Activated CD4-positive, alpha-beta T cell treated with anti-CD3 and anti-CD28 coated beads for 36 hours (primary cell): ENCODE measurements at regions of chr13 and their contacts with region 1.

Region 1: DNA sequence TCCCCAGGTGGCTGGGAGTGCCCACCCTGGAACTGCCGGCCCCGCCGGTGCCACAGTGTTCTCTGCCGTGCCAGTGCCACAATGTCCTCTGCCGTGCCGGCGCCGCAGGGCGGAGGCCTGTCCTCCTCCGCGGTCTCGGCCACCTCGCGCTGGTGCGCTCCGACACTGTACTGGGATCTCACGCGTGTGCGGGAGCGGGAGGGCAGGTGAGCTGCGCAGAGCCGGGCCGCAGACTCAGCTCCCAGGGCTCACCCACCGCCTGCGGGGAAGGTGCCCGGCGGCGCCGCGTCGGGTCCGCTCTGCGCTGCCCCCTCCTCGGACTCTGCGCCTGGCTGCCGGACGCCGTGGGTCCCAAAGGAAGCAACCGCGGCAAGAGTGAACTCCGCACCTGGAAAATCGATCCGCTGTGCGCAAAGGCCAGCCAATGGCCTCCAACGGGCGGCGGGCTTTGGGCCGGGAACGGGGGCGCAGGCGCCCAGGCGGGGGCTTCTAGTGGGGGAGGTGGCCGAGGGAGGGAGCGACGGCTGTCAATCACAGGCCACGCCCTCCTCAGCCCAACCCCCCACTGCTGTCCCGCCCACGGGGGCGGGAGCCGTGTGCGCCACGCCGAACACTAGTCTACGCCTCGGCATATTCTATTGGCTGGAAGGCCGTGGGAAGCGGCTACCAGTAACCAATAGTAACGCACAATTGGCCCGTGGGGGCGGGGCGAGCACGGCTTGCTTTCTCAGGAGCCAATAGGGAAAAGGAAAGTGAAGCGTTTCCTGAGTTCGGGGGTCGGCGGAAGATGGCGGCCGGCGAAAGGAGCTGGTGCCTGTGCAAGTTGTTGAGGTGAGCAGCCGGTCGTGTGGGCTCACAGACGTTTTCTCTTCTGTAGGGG is at the start of gene ALG11:
- DNase-seq: peak; percentile 100
- ATAC-seq: peak; percentile 99
- H3K4me3 Mint-ChIP-seq: peak within 1 kb of the TSS; percentile 100
- H3K27ac Mint-ChIP-seq: peak within 1 kb of the TSS; percentile 91
- H3K4me1 Mint-ChIP-seq: peaks cover 20% of the 10 kb centered on the region
- H3K27me3 Mint-ChIP-seq: peaks cover 17% of the 10 kb centered on the region
- total RNA-seq, gene ALG11: 14.1 to 18.1 TPM

Region 2: DNA sequence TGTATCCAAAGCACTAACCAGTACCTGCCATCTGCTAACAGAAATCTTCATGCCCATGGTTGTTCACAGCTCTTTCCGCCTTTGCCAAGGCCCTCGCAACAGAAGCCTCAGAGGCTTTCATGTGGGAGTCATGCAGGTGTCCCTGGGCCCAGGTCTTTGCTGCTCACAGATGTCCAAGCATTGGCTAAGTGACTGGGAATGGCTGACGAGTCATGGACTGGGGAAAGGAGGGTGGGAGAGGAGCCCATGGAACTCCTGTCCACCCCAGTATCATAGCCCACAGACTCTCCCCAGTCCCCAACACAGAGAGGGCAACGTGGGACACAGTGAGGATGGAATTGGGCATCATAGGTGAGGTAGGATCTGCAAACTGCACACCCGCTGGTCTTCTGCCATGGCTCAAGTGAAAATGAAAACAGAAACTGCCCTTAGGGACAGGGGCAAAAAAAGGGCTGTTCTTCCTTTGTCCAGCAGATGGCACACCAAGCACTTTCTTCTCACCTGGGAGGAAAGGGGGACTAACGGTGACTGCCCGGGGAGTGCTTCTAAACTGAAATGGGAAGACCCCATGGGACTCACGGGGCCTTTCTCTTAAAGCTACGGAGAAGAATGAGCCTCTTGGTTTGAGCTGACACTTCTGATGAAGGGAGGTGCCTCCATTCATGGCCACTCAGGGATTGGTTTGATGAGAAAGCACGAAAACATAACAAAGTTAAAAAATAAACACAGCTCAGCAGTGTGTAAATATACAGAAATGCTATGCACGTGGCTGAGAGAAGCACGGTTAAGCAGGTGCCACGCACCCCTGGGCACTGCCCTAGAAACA is 196.8 kb before region 1 on chr13:
- CTCF ChIA-PET with region 1: interaction called, 3 read pairs
- POLR2A ChIA-PET with region 1: no interaction called
- intact Hi-C with region 1: loop called in 1 of 2 experiments (anchors 2 kb)
- DNase-seq: peak; percentile 83
- ATAC-seq: peak; percentile 70
- H3K4me3 Mint-ChIP-seq: peak overlapping the region; percentile 56
- H3K27ac Mint-ChIP-seq: peak overlapping the region; percentile 83
- H3K4me1 Mint-ChIP-seq: peaks cover 81% of the 10 kb centered on the region
- H3K27me3 Mint-ChIP-seq: no peaks in the 10 kb centered on the region

Region 3: GRCh38 chr13:52001120-52001731 is 10.6 kb before region 1 on chr13:
- CTCF ChIA-PET with region 1: interaction called, 17 read pairs
- POLR2A ChIA-PET with region 1: no interaction called
- intact Hi-C with region 1: no loop called
- DNase-seq: no peak
- ATAC-seq: peak; percentile 89
- H3K4me3 Mint-ChIP-seq: no peak overlapping the region
- H3K27ac Mint-ChIP-seq: no peak overlapping the region
- H3K4me1 Mint-ChIP-seq: peaks cover 3% of the 10 kb centered on the region
- H3K27me3 Mint-ChIP-seq: peaks cover 4% of the 10 kb centered on the region

Region 4: DNA sequence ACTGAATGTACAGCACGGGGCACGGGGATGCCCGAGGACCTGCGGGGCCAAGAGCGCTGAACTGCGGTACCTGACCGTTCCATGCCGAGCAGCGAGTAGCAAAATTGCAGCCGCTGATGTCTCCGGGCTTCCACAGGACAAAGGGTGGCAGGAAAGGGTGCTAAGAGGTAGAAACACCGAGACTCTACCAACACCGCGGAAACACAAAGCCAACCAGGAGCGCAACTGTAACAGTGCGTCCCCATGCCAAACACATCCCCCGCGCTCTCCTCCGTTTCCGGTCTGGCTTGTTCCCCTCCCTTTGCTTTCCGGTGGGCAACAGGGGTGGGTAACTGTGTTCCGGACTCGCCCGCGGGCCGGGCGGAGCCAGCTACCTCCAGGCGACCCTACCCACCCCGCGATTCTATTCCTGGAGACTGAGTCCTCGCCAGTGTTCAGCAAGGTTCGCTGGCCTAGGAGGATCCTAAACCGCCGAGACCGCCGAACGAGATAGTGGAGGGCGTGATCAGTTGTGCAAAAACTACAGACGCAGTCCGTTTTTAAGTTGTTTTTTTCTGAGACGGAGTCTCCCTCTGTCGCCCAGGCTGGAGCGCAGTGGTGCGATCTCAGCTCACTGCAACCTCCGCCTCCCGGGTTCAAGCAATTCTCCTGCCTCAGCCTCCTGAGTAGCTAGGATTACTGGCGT is 182.5 kb after region 1 on chr13:
- CTCF ChIA-PET with region 1: no interaction called
- POLR2A ChIA-PET with region 1: no interaction called
- intact Hi-C with region 1: loop called (anchors 1 kb)
- DNase-seq: peak; percentile 92
- ATAC-seq: peak; percentile 83
- H3K4me3 Mint-ChIP-seq: peak overlapping the region; percentile 86
- H3K27ac Mint-ChIP-seq: peak overlapping the region; percentile 100
- H3K4me1 Mint-ChIP-seq: peaks cover 32% of the 10 kb centered on the region
- H3K27me3 Mint-ChIP-seq: no peaks in the 10 kb centered on the region